Ovary (tissue), 10 donors: ENCODE measurements at regions of chr18 and their contacts with region 1.

Region 1: GRCh38 chr18:7598167-7599047 is 31.3 kb downstream of the PTPRM start:
- DNase-seq: peak in 2 of 5 donors; percentile 17 to 65
- H3K4me3 ChIP-seq: no peak overlapping the region
- H3K27ac ChIP-seq: no peak overlapping the region
- H3K4me1 ChIP-seq: peaks cover 1% of the 10 kb centered on the region
- H3K27me3 ChIP-seq: no peaks in the 10 kb centered on the region
- CTCF ChIP-seq: no peak
- EP300 ChIP-seq: no peak
- POLR2A ChIP-seq: no peak

Region 2: GRCh38 chr18:7617738-7618422 is 19.5 kb after region 1 on chr18:
- intact Hi-C with region 1: no loop called
- DNase-seq: peak in 3 of 5 donors; percentile 42 to 50 (median 43)
- H3K4me3 ChIP-seq: no peak overlapping the region
- H3K27ac ChIP-seq: no peak overlapping the region
- H3K4me1 ChIP-seq: peaks cover 1% of the 10 kb centered on the region
- H3K27me3 ChIP-seq: no peaks in the 10 kb centered on the region
- CTCF ChIP-seq: no peak
- EP300 ChIP-seq: no peak
- POLR2A ChIP-seq: no peak

Region 3: GRCh38 chr18:7666195-7666776 is 67.9 kb after region 1 on chr18:
- intact Hi-C with region 1: no loop called
- DNase-seq: no peak
- H3K4me3 ChIP-seq: no peak overlapping the region
- H3K27ac ChIP-seq: no peak overlapping the region
- H3K4me1 ChIP-seq: no peaks in the 10 kb centered on the region
- H3K27me3 ChIP-seq: no peaks in the 10 kb centered on the region
- CTCF ChIP-seq: no peak
- EP300 ChIP-seq: no peak
- POLR2A ChIP-seq: no peak

Region 4: GRCh38 chr18:8998481-8999217 is 1400.2 kb after region 1 on chr18:
- intact Hi-C with region 1: loop called in 1 of 4 experiments (anchors 5 kb)
- DNase-seq: no peak
- H3K4me3 ChIP-seq: no peak overlapping the region
- H3K27ac ChIP-seq: no peak overlapping the region
- H3K4me1 ChIP-seq: no peaks in the 10 kb centered on the region
- H3K27me3 ChIP-seq: no peaks in the 10 kb centered on the region
- CTCF ChIP-seq: no peak
- EP300 ChIP-seq: no peak
- POLR2A ChIP-seq: no peak